Panc1 (cell line): ENCODE measurements at regions of chr10 and their contacts with region 1.

Region 1: GRCh38 chr10:96664563-96664962 is 55.8 kb downstream of the PIK3AP1 start:
- DNase-seq: no peak
- ATAC-seq: 0 out of 2 replicates have a peak, but pooled peaks have one; percentile 26
- H3K4me3 ChIP-seq: no peak overlapping the region
- H3K27ac ChIP-seq: no peak overlapping the region
- H3K4me1 ChIP-seq: no peaks in the 10 kb centered on the region; the same call in 1 of the 2 replicates
- H3K27me3 ChIP-seq: no peaks in the 10 kb centered on the region
- CTCF ChIP-seq: no peak

Region 2: GRCh38 chr10:96678725-96679124 is 14.2 kb after region 1 on chr10:
- CTCF ChIA-PET with region 1: no interaction called
- POLR2A ChIA-PET with region 1: interaction called, 10 read pairs
- in situ Hi-C with region 1: no loop called
- intact Hi-C with region 1: no loop called
- DNase-seq: no peak
- ATAC-seq: no peak
- H3K4me3 ChIP-seq: no peak overlapping the region
- H3K27ac ChIP-seq: no peak overlapping the region
- H3K4me1 ChIP-seq: peaks cover 10% of the 10 kb centered on the region
- H3K27me3 ChIP-seq: no peaks in the 10 kb centered on the region
- CTCF ChIP-seq: no peak

Region 3: DNA sequence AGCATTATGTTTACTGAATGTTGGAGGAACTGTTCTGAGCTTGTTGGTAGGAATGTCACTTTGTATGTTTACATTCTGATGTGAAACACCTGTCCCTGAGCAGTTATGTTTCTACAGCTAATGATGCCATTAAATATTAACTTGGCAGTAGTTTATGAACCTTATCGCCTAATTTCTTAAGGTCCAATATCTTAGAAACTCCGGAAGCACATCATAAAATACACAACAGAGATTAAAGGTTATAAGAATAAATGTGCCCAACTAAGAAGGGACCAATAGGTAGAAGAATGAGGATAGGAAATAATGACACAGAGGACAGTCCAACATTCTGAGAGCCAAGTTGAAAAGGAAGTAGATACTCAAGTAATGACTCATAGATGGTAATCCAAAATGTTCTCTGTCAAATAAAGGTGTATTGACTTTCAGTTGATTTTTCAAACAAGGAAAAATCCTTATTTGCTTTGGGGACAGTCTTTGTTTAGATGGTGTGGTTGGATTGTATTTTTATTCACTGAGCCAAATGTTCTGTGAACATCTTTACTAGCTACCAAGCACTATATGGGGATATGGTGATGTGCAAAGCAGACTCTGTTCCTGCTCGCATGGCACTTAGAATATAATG is 199.5 kb after region 1 on chr10:
- CTCF ChIA-PET with region 1: no interaction called
- POLR2A ChIA-PET with region 1: no interaction called
- in situ Hi-C with region 1: no loop called
- intact Hi-C with region 1: no loop called
- DNase-seq: peak; percentile 67
- ATAC-seq: peak; percentile 88
- H3K4me3 ChIP-seq: no peak overlapping the region
- H3K27ac ChIP-seq: no peak overlapping the region
- H3K4me1 ChIP-seq: peaks cover 17% of the 10 kb centered on the region
- H3K27me3 ChIP-seq: no peaks in the 10 kb centered on the region
- CTCF ChIP-seq: no peak